ENCODE measurements at regions of chr2 and their contacts with region 1.

Region 1: GRCh38 chr2:191051825-191052778 is 38.1 kb upstream of the STAT1 start:
- DNase-seq: peak; percentile 74
- ATAC-seq: peak; percentile 16; the same call in 1 of the 2 replicates
- H3K4me3 ChIP-seq: no peak overlapping the region
- H3K27ac ChIP-seq: peak overlapping the region; percentile 92; the same call in 1 of the 2 replicates
- H3K4me1 ChIP-seq: peaks cover 19% of the 10 kb centered on the region
- H3K27me3 ChIP-seq: no peaks in the 10 kb centered on the region
- CTCF ChIP-seq: peak; percentile 76
- POLR2A ChIP-seq: no peak
- RAD21 ChIP-seq: peak; percentile 77

Region 2: DNA sequence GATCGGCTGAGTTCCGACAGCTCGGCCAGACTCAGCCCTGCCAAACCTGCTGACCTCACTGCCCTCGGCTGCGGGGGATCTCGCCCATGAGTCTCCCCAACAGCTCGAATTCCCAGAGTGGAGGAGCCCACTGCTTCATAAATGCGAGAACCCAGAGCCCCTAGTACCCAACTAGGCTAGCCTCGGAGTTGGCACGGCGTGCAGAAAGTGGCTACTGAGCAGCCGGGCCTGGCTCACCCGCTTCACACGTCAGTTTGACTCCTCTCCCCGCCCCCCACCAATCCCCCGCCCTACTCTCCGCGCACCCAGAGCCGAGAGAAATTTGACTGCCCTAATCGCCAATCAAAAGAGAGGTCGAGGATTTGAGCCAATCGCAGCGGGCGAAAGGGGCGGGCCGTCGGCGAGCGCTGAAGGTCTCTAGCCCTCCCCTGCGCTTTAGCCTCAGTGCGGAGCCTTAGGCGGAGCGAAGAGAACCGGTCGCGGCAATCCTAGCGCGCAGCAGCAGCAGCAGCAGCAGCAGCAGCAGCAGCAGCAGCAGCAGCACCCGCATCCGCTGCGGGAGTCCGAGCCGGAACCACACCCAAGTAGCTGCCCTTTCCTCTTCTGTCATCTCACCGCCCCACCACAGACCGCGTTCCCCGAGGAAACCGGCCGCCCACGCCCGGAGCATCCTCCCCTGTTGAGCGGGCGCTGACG is 171.6 kb before region 1 on chr2 and contains the start of gene GLS:
- CTCF ChIA-PET with region 1: no interaction called
- POLR2A ChIA-PET with region 1: no interaction called
- dilution Hi-C with region 1: no loop called
- in situ Hi-C with region 1: no loop called
- intact Hi-C with region 1: no loop called
- DNase-seq: peak; percentile 96
- ATAC-seq: peak; percentile 90
- H3K4me3 ChIP-seq: peak within 1 kb of the TSS; percentile 66
- H3K27ac ChIP-seq: peak within 1 kb of the TSS; percentile 97
- H3K4me1 ChIP-seq: peaks cover 3% of the 10 kb centered on the region; the same call in 1 of the 2 replicates
- H3K27me3 ChIP-seq: no peaks in the 10 kb centered on the region
- CTCF ChIP-seq: no peak
- POLR2A ChIP-seq: peak; percentile 99
- RAD21 ChIP-seq: no peak
- total RNA-seq, gene GLS: 130 and 279 TPM in 2 replicates

Region 3: DNA sequence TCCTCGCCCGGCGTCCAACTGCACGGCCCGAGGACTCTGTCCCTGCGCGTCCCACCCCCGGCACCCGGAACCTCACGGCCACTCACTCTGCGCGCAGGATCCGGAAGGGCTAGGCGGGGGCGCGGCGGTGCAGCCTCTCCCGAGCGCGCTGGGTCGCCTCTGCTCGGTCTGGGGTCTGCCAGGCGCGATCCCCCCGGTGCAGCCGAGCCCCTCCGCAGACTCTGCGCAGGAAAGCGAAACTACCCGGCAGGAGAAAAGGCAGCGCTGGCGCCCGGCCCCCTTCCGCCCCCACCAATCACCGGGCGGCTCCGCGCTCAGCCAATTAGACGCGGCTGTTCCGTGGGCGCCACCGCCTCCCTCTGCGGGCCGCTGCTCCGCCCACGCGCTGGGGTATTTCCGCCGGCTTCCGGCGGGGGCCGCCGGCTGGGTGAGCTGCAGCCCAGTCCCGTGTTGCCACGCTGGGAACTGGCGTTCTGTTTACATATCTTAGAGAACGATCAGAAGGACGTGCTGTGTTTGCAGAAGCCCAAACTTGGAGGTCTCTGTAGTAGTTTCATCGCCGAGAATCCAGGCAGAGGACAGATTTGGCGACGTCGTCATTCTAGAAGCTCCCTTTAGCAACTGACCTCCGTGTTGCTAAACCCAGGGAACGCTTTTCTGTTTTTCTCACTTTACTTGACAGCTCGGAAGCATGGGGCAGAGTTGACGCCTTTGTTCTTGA is 38.0 kb before region 1 on chr2 and contains the start of gene STAT1:
- CTCF ChIA-PET with region 1: interaction called, 4 read pairs
- POLR2A ChIA-PET with region 1: no interaction called
- dilution Hi-C with region 1: no loop called
- in situ Hi-C with region 1: no loop called
- intact Hi-C with region 1: loop called (anchors 5 kb)
- DNase-seq: peak; percentile 93
- ATAC-seq: peak; percentile 94
- H3K4me3 ChIP-seq: peak within 1 kb of the TSS; percentile 82
- H3K27ac ChIP-seq: peak within 1 kb of the TSS; percentile 82
- H3K4me1 ChIP-seq: peaks cover 12% of the 10 kb centered on the region
- H3K27me3 ChIP-seq: no peaks in the 10 kb centered on the region
- CTCF ChIP-seq: no peak
- POLR2A ChIP-seq: peak; percentile 96
- RAD21 ChIP-seq: peak; percentile 30; the same call in 1 of the 2 replicates
- total RNA-seq, gene STAT1: 67.9 and 80.3 TPM in 2 replicates

Region 4: DNA sequence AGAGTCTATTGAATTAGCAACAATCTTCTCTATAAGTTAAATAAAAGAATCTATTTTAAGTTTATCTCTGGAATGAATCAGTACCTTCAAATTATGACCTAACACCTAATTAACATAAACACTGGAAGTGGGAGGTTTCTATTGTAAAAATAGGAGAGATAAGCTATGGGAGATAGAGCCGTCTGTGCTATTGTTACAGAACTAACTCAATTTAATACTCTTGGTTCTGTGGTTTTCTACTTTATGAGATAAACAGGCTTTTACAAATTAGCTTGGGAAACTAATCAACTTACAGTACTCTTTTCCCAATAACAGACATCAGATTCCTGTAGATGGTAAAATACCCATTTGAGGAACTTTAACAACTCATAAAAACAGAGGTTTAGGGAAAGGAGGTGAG is 12.5 kb before region 1 on chr2:
- CTCF ChIA-PET with region 1: interaction called, 3 read pairs
- POLR2A ChIA-PET with region 1: interaction called, 12 read pairs
- dilution Hi-C with region 1: no loop called
- in situ Hi-C with region 1: no loop called
- intact Hi-C with region 1: no loop called
- DNase-seq: no peak
- ATAC-seq: no peak
- H3K4me3 ChIP-seq: no peak overlapping the region
- H3K27ac ChIP-seq: no peak overlapping the region
- H3K4me1 ChIP-seq: peaks cover 16% of the 10 kb centered on the region
- H3K27me3 ChIP-seq: no peaks in the 10 kb centered on the region
- CTCF ChIP-seq: no peak
- POLR2A ChIP-seq: no peak
- RAD21 ChIP-seq: no peak

Region 5: GRCh38 chr2:191150600-191151330 is 98.7 kb after region 1 on chr2 and contains the start of gene STAT4:
- CTCF ChIA-PET with region 1: interaction called, 53 read pairs
- POLR2A ChIA-PET with region 1: interaction called, 5 read pairs
- dilution Hi-C with region 1: no loop called
- in situ Hi-C with region 1: loop called (anchors 5 kb)
- intact Hi-C with region 1: loop called (anchors 1 kb)
- DNase-seq: peak; percentile 47
- ATAC-seq: peak; percentile 48
- H3K4me3 ChIP-seq: peak within 1 kb of the TSS; percentile 41
- H3K27ac ChIP-seq: no peak within 1 kb of the TSS
- H3K4me1 ChIP-seq: no peaks in the 10 kb centered on the region
- H3K27me3 ChIP-seq: peaks cover 1% of the 10 kb centered on the region; the same call in 1 of the 2 replicates
- CTCF ChIP-seq: no peak
- POLR2A ChIP-seq: no peak
- RAD21 ChIP-seq: no peak
- total RNA-seq, gene STAT4: 0.28 and 0.36 TPM in 2 replicates

Region 6: GRCh38 chr2:191521608-191522208 is 469.6 kb after region 1 on chr2:
- CTCF ChIA-PET with region 1: interaction called, 6 read pairs
- POLR2A ChIA-PET with region 1: no interaction called
- dilution Hi-C with region 1: no loop called
- in situ Hi-C with region 1: no loop called
- intact Hi-C with region 1: loop called (anchors 2 kb)
- DNase-seq: peak; percentile 55
- ATAC-seq: peak; percentile 68; the same call in 1 of the 2 replicates
- H3K4me3 ChIP-seq: no peak overlapping the region
- H3K27ac ChIP-seq: no peak overlapping the region
- H3K4me1 ChIP-seq: no peaks in the 10 kb centered on the region
- H3K27me3 ChIP-seq: no peaks in the 10 kb centered on the region; the same call in 1 of the 2 replicates
- CTCF ChIP-seq: peak; percentile 90
- POLR2A ChIP-seq: 0 out of 2 replicates have a peak, but pooled peaks have one; percentile 40
- RAD21 ChIP-seq: peak; percentile 83

Region 7: GRCh38 chr2:191533693-191534180 is 481.6 kb after region 1 on chr2:
- CTCF ChIA-PET with region 1: no interaction called
- POLR2A ChIA-PET with region 1: no interaction called
- dilution Hi-C with region 1: no loop called
- in situ Hi-C with region 1: no loop called
- intact Hi-C with region 1: no loop called
- DNase-seq: no peak
- ATAC-seq: no peak
- H3K4me3 ChIP-seq: no peak overlapping the region
- H3K27ac ChIP-seq: no peak overlapping the region
- H3K4me1 ChIP-seq: no peaks in the 10 kb centered on the region
- H3K27me3 ChIP-seq: peaks cover 10% of the 10 kb centered on the region
- CTCF ChIP-seq: no peak
- POLR2A ChIP-seq: no peak
- RAD21 ChIP-seq: no peak